ENCODE measurements at regions of chr16 and their contacts with region 1.

Region 1: GRCh38 chr16:80518436-80518835 is 22.4 kb upstream of the DYNLRB2 start:
- DNase-seq: no peak
- H3K4me3 ChIP-seq: no peak overlapping the region
- H3K27ac ChIP-seq: no peak overlapping the region
- H3K4me1 ChIP-seq: no peaks in the 10 kb centered on the region
- H3K27me3 ChIP-seq: no peaks in the 10 kb centered on the region
- CTCF ChIP-seq: no peak
- POLR2A ChIP-seq: no peak

Region 2: GRCh38 chr16:80427795-80428194 is 90.6 kb before region 1 on chr16:
- intact Hi-C with region 1: no loop called
- DNase-seq: no peak
- H3K4me3 ChIP-seq: no peak overlapping the region
- H3K27ac ChIP-seq: no peak overlapping the region
- H3K4me1 ChIP-seq: no peaks in the 10 kb centered on the region
- H3K27me3 ChIP-seq: no peaks in the 10 kb centered on the region
- CTCF ChIP-seq: no peak
- POLR2A ChIP-seq: no peak

Region 3: GRCh38 chr16:80585764-80586163 is 67.3 kb after region 1 on chr16:
- intact Hi-C with region 1: loop called (anchors 2 kb)
- DNase-seq: no peak
- H3K4me3 ChIP-seq: no peak overlapping the region
- H3K27ac ChIP-seq: no peak overlapping the region
- H3K4me1 ChIP-seq: no peaks in the 10 kb centered on the region
- H3K27me3 ChIP-seq: no peaks in the 10 kb centered on the region
- CTCF ChIP-seq: no peak
- POLR2A ChIP-seq: no peak